Activated CD4-positive, alpha-beta memory T cell treated with anti-CD3 and anti-CD28 coated beads for 36 hours (primary cell): ENCODE measurements at regions of chr5 and their contacts with region 1.

Region 1: GRCh38 chr5:131595088-131596033 is 39.7 kb downstream of the RAPGEF6 start:
- DNase-seq: peak; percentile 33
- H3K4me3 Mint-ChIP-seq: no peak overlapping the region
- H3K27ac Mint-ChIP-seq: peak overlapping the region; percentile 52
- H3K4me1 Mint-ChIP-seq: peaks cover 57% of the 10 kb centered on the region
- H3K27me3 Mint-ChIP-seq: no peaks in the 10 kb centered on the region

Region 2: GRCh38 chr5:131628990-131629389 is 33.6 kb after region 1 on chr5:
- CTCF ChIA-PET with region 1: no interaction called
- POLR2A ChIA-PET with region 1: no interaction called
- intact Hi-C with region 1: loop called (anchors 1 kb)
- DNase-seq: no peak
- H3K4me3 Mint-ChIP-seq: no peak overlapping the region
- H3K27ac Mint-ChIP-seq: peak overlapping the region; percentile 11
- H3K4me1 Mint-ChIP-seq: peaks cover 48% of the 10 kb centered on the region
- H3K27me3 Mint-ChIP-seq: no peaks in the 10 kb centered on the region